Heart right ventricle (tissue), 16 donors: ENCODE measurements at regions of chr10 and their contacts with region 1.

Region 1: DNA sequence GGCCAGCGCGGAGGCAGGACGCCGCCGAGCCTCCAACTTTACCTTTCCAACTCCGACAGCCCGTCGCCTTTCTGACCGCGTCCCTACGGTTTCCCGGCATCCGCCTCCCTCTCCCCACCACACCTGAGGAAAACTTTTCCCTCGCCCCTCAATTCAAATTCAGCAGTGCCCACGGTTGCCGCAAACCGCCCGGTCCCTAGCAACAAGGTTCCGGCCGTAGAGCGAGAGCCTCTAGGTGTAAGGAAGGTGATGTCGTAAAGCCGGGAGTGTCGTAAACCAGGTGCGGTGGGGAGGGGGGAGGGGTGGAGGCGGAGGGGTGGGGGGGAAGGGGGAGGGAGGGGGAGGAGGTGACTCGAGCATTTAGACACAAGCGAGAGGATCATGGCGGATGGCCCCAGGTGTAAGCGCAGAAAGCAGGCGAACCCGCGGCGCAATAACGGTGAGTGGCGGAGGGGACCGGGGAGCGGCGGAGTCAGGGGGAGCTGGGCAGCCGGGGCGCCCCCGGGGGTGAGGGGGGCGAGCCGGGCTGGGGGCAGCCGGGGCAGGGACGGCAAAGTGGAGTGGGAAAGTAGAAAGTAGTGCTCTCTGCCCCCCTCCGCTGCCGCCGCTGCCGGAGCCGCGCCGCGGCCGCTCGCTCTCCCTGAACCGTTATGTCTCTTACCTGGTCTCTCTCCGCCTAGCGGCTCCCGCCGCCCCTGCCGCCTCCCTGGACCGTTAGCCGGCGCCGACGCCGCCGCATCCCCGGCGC is at the start of gene ZEB1:
- DNase-seq: peak; percentile 76 to 93
- ATAC-seq: peak; percentile 64 to 89 (median 72)
- H3K4me3 ChIP-seq: peak within 1 kb of the TSS; percentile 84 to 96 (median 92)
- H3K27ac ChIP-seq: peak within 1 kb of the TSS; percentile 89 to 99 (median 97)
- H3K4me1 ChIP-seq: peaks cover 0 to 58% (median 27%) of the 10 kb centered on the region in 9 donors
- H3K27me3 ChIP-seq: peaks cover 0 to 22% (median 0%) of the 10 kb centered on the region in 7 donors
- CTCF ChIP-seq: peak; percentile 26 to 67 (median 54)
- total RNA-seq, gene ZEB1: 87.4 to 125 (median 102) TPM

Region 2: GRCh38 chr10:31031558-31032257 is 287.3 kb before region 1 on chr10 and contains the start of gene ZNF438:
- intact Hi-C with region 1: loop called in 6 of 10 experiments (anchors 2 to 5 kb)
- DNase-seq: peak; percentile 93 to 97
- ATAC-seq: peak; percentile 95 to 99 (median 96)
- H3K4me3 ChIP-seq: peak within 1 kb of the TSS; percentile 26 to 82 (median 62)
- H3K27ac ChIP-seq: peak within 1 kb of the TSS; percentile 97 to 100 (median 99)
- H3K4me1 ChIP-seq: peaks cover 0 to 58% (median 45%) of the 10 kb centered on the region in 9 donors
- H3K27me3 ChIP-seq: no peaks in the 10 kb centered on the region
- CTCF ChIP-seq: peak; percentile 41 to 86 (median 66)
- total RNA-seq, gene ZNF438: 9.3 to 16.1 (median 12.4) TPM

Region 3: GRCh38 chr10:31157123-31158010 is 161.7 kb before region 1 on chr10:
- intact Hi-C with region 1: loop called in 1 of 10 experiments (anchors 10 kb)
- DNase-seq: peak; percentile 69 to 85
- ATAC-seq: peak; percentile 87 to 94 (median 92)
- H3K4me3 ChIP-seq: peak overlapping the region in 1 of 10 donors; percentile 22
- H3K27ac ChIP-seq: peak overlapping the region; percentile 67 to 90 (median 78)
- H3K4me1 ChIP-seq: peaks cover 15 to 48% (median 32%) of the 10 kb centered on the region in 9 donors
- H3K27me3 ChIP-seq: no peaks in the 10 kb centered on the region
- CTCF ChIP-seq: no peak

Region 4: DNA sequence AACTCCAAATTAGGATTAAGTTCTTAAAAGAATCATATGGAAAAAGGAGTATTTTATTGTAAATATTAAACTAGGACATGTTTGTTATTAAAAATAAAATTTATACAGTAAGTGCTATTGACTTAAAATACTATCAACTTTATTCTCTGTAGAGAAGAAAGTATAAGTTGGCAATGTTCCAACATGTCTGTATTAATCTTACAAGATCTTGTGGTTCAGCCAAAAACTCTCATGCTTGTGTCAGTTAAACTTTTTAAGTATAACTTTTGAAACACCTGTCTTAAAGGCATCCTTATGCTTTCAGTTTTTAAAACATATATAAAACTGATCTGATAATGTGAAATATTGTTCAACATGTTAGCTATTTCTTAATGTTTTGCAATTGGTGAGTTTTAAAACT is 160.7 kb after region 1 on chr10:
- intact Hi-C with region 1: loop called in 2 of 10 experiments (anchors 10 kb)
- DNase-seq: no peak
- ATAC-seq: no peak
- H3K4me3 ChIP-seq: no peak overlapping the region
- H3K27ac ChIP-seq: no peak overlapping the region
- H3K4me1 ChIP-seq: peaks cover 0 to 6% (median 0%) of the 10 kb centered on the region in 9 donors
- H3K27me3 ChIP-seq: no peaks in the 10 kb centered on the region
- CTCF ChIP-seq: no peak

Region 5: GRCh38 chr10:31707093-31708039 is 388.3 kb after region 1 on chr10:
- intact Hi-C with region 1: loop called in 3 of 10 experiments (anchors 10 kb)
- DNase-seq: peak; percentile 72 to 83
- ATAC-seq: peak; percentile 82 to 95 (median 89)
- H3K4me3 ChIP-seq: peak overlapping the region in 6 of 10 donors; percentile 26 to 36 (median 34)
- H3K27ac ChIP-seq: peak overlapping the region; percentile 62 to 97 (median 88)
- H3K4me1 ChIP-seq: peaks cover 15 to 64% (median 50%) of the 10 kb centered on the region in 9 donors
- H3K27me3 ChIP-seq: no peaks in the 10 kb centered on the region
- CTCF ChIP-seq: no peak